Transverse colon (tissue), 4 donors: ENCODE measurements at regions of chr6 and their contacts with region 1.

Region 1: GRCh38 chr6:32885698-32886286 is 31.8 kb downstream of the PSMB9 start:
- DNase-seq: no peak
- H3K4me3 ChIP-seq: no peak overlapping the region
- H3K27ac ChIP-seq: no peak overlapping the region
- H3K4me1 ChIP-seq: peaks cover 4 to 20% (median 8%) of the 10 kb centered on the region in 4 donors
- H3K27me3 ChIP-seq: no peaks in the 10 kb centered on the region
- CTCF ChIP-seq: peak; percentile 65 to 77 (median 66)
- EP300 ChIP-seq: no peak
- POLR2A ChIP-seq: no peak

Region 2: DNA sequence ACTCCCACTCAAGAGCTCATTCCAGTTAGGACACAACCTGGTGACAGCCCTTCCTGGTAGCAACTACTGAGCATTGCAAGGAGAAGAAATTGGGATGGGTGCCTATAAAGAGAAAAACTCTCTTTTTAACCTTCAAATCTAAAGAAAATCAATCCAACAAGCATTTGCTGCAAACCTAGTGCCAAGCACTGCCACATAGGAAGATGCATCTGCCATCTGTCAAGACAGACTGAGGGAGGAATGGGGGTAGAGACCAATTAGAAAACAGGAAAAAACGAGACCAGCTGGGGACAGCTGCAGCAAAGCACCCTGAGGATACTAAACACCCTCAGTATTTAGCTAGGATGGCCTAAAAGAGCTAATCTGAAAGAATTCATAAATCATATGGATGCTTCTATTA is 27.2 kb after region 1 on chr6:
- in situ Hi-C with region 1: no loop called
- intact Hi-C with region 1: loop called (anchors 1 kb)
- DNase-seq: no peak
- H3K4me3 ChIP-seq: no peak overlapping the region
- H3K27ac ChIP-seq: no peak overlapping the region
- H3K4me1 ChIP-seq: no peaks in the 10 kb centered on the region
- H3K27me3 ChIP-seq: no peaks in the 10 kb centered on the region
- CTCF ChIP-seq: no peak
- EP300 ChIP-seq: no peak
- POLR2A ChIP-seq: no peak

Region 3: DNA sequence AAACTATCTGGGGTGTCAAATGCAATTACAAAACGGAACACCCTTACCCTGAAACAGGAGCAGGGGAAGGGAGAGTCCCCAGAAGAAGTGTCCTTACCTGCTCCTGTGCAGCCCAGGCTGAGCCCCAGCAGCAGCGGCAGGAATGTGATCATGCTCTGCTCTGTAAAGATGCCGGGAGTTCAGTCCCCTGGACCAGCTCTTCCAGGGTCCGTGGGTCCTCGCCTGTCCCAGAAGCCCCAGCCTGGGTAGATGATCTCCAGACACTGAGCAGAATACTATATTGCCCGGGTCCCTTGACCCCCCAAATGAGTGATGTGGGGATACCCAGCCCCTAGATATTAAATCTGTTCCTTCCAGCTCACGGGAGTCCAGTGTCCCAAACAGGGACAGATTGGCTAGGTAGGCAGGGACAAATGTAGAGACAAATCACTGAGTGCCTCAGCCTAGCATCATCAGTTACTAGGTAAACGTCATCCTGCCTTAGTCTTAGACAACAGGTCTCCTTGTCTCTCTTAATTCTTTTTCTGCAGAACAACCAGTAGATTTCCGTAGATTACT is 54.9 kb after region 1 on chr6 and contains the start of gene HLA-DMB:
- in situ Hi-C with region 1: loop called in 1 of 4 experiments (anchors 5 kb)
- intact Hi-C with region 1: no loop called
- DNase-seq: peak; percentile 61
- H3K4me3 ChIP-seq: peak within 1 kb of the TSS; percentile 7 to 49 (median 13)
- H3K27ac ChIP-seq: peak within 1 kb of the TSS; percentile 68 to 74 (median 68)
- H3K4me1 ChIP-seq: peaks cover 3 to 35% (median 7%) of the 10 kb centered on the region in 4 donors
- H3K27me3 ChIP-seq: no peaks in the 10 kb centered on the region
- CTCF ChIP-seq: no peak
- EP300 ChIP-seq: no peak
- POLR2A ChIP-seq: peak; percentile 38
- total RNA-seq, gene HLA-DMB: 1.8 to 20.8 (median 13.2) TPM

Region 4: GRCh38 chr6:32971581-32972352 is 86.0 kb after region 1 on chr6:
- in situ Hi-C with region 1: loop called in 2 of 4 experiments (anchors 10 to 25 kb)
- intact Hi-C with region 1: no loop called
- DNase-seq: peak; percentile 100
- H3K4me3 ChIP-seq: peak overlapping the region; percentile 63 to 86 (median 84)
- H3K27ac ChIP-seq: peak overlapping the region; percentile 98 to 100 (median 99)
- H3K4me1 ChIP-seq: peaks cover 25 to 40% (median 33%) of the 10 kb centered on the region in 4 donors
- H3K27me3 ChIP-seq: no peaks in the 10 kb centered on the region
- CTCF ChIP-seq: peak in 2 of 5 experiments; percentile 3 to 26
- EP300 ChIP-seq: peak; percentile 23
- POLR2A ChIP-seq: peak; percentile 100

Region 5: DNA sequence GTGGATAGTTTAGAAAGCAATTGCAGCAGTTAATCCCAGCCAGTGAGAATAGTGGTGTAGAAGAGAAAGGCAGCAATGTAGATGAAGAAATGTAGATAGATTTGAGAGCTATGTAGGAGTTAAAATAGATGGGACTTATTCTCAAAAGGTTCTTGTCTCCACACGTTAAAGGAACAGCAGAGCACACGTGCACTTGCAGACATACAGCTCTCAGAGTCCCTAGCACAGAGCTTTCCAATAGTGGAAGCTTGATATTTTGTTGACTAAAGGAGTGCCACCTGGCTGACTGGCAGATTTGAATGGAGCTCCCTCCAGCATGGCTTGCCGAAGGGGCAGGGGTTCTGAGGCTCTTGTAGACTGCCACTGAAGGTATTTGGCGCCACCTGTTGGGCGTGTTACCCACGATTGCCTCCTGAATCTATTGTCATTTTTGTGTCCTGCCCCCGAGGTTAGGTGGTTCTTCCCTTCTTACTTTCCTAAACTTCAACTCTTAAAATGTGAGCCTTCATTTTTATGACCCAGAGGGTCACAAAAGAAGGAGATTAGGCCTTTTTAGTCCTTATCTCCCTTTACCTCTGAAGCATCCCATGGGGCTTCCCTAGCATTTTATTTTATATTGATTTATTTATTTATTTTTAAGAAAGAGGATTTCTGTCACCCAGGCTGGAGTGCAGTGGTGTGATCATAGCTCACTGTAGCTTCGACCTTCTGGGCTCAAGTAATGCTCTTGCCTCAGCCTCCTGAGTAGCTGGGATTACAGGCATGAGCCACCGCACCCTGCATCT is 99.0 kb after region 1 on chr6:
- in situ Hi-C with region 1: loop called (anchors 5 to 25 kb)
- intact Hi-C with region 1: loop called (anchors 1 kb)
- DNase-seq: peak; percentile 95
- H3K4me3 ChIP-seq: no peak overlapping the region
- H3K27ac ChIP-seq: peak overlapping the region; percentile 14 to 61 (median 43)
- H3K4me1 ChIP-seq: peaks cover 20 to 56% (median 43%) of the 10 kb centered on the region in 4 donors
- H3K27me3 ChIP-seq: no peaks in the 10 kb centered on the region
- CTCF ChIP-seq: peak; percentile 86 to 91 (median 88)
- EP300 ChIP-seq: no peak
- POLR2A ChIP-seq: no peak

Region 6: DNA sequence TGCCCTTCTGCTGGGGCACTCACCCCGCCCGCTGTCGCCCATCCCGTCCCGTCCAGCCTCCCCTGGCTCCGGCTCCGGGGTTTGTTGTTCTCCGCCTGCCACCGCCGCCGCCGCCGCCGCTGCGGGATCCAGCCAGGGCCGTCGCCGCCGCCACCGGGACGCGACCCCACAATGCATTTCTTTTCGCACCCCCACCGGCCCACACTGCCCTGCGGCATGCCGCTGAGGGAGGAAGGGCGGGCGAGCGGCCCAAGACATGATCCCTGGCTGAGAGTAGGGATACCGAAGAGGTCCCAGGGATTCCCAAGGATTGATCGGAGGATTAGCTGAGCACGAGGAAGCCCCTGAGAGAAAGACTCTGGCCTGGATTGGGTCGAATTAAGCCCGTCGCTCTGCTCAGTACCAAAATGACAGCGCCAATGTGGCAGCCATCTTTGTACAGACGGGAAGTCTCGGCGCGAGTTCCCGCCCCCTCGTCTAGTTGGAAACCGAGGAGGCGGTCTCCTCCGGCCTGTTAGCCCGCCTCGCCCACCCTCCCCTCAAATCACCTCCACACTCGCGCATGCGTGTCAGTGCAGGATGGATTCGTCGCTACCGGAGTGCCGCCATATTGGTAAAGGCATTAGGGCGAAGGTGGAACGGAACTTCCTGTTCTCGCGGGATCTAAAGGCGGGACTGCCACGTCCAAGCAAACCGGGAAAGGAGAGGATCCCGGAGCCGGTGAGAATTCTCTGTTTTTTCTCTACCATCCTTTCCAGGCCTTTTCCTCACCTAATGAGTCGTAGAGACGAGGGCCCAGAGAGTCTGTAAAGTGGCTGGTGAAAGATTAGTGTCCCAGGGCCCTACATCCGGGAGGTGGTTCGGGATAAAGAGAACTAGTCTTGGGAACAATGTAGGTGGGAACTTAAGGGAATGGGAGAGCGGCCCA is 314.7 kb after region 1 on chr6 and contains the starts of genes RXRB and SLC39A7:
- in situ Hi-C with region 1: no loop called
- intact Hi-C with region 1: no loop called
- DNase-seq: peak; percentile 99
- H3K4me3 ChIP-seq: peak within 1 kb of the TSS; percentile 76 to 98 (median 84)
- H3K27ac ChIP-seq: peak within 1 kb of the TSS; percentile 92 to 98 (median 95)
- H3K4me1 ChIP-seq: peaks cover 34 to 62% (median 49%) of the 10 kb centered on the region in 4 donors
- H3K27me3 ChIP-seq: no peaks in the 10 kb centered on the region
- CTCF ChIP-seq: no peak
- EP300 ChIP-seq: no peak
- POLR2A ChIP-seq: peak; percentile 78
- total RNA-seq, gene RXRB: 26.9 to 31.9 (median 29.4) TPM
- total RNA-seq, gene SLC39A7: 38.2 to 99.9 (median 60.5) TPM